ENCODE measurements at regions of chr1 and their contacts with region 1.

Region 1: GRCh38 chr1:214506972-214507482 is 44.4 kb downstream of the PTPN14 start:
- DNase-seq: peak; percentile 97
- H3K4me3 ChIP-seq: peak overlapping the region; percentile 34
- H3K4me3 Mint-ChIP-seq: peak overlapping the region; percentile 65
- H3K27ac Mint-ChIP-seq: peak overlapping the region; percentile 92
- H3K4me1 ChIP-seq: peaks cover 59% of the 10 kb centered on the region
- H3K4me1 Mint-ChIP-seq: peaks cover 47% of the 10 kb centered on the region
- H3K27me3 ChIP-seq: no peaks in the 10 kb centered on the region
- H3K27me3 Mint-ChIP-seq: no peaks in the 10 kb centered on the region
- CTCF ChIP-seq: no peak

Region 2: GRCh38 chr1:214364386-214364785 is 142.6 kb before region 1 on chr1:
- CTCF ChIA-PET with region 1: no interaction called
- POLR2A ChIA-PET with region 1: no interaction called
- intact Hi-C with region 1: loop called (anchors 1 kb)
- DNase-seq: peak in 1 of 2 experiments; percentile 56
- H3K4me3 ChIP-seq: no peak overlapping the region
- H3K4me3 Mint-ChIP-seq: peak overlapping the region; percentile 60
- H3K27ac Mint-ChIP-seq: peak overlapping the region; percentile 90
- H3K4me1 ChIP-seq: peaks cover 53% of the 10 kb centered on the region
- H3K4me1 Mint-ChIP-seq: peaks cover 64% of the 10 kb centered on the region
- H3K27me3 ChIP-seq: no peaks in the 10 kb centered on the region
- H3K27me3 Mint-ChIP-seq: no peaks in the 10 kb centered on the region
- CTCF ChIP-seq: no peak

Region 3: DNA sequence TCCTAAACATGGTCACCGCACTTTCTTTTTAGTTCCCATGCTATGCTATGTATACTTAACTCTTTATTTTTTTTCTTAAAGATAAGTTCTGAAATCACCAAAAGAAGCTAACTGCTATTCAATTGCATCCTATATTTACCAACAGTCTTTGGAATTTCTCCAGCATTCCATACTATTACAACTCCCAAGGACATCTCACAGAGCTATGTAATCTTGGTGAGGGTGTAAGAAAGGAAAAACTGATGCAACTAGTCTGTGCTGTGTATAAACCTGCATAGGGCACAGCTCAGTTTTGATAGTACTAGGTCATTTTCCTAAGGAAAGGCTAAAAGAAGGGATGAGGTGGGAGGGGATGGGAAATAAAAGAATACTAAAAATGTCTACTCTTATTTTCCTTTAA is 33.6 kb before region 1 on chr1:
- CTCF ChIA-PET with region 1: no interaction called
- POLR2A ChIA-PET with region 1: no interaction called
- intact Hi-C with region 1: loop called (anchors 1 kb)
- DNase-seq: peak in 1 of 2 experiments; percentile 40
- H3K4me3 ChIP-seq: no peak overlapping the region
- H3K4me3 Mint-ChIP-seq: peak overlapping the region; percentile 31
- H3K27ac Mint-ChIP-seq: peak overlapping the region; percentile 80
- H3K4me1 ChIP-seq: peaks cover 82% of the 10 kb centered on the region
- H3K4me1 Mint-ChIP-seq: peaks cover 62% of the 10 kb centered on the region
- H3K27me3 ChIP-seq: no peaks in the 10 kb centered on the region
- H3K27me3 Mint-ChIP-seq: no peaks in the 10 kb centered on the region
- CTCF ChIP-seq: no peak

Region 4: GRCh38 chr1:214494706-214495105 is 12.3 kb before region 1 on chr1:
- CTCF ChIA-PET with region 1: no interaction called
- POLR2A ChIA-PET with region 1: no interaction called
- intact Hi-C with region 1: no loop called
- DNase-seq: no peak
- H3K4me3 ChIP-seq: no peak overlapping the region
- H3K4me3 Mint-ChIP-seq: no peak overlapping the region
- H3K27ac Mint-ChIP-seq: peak overlapping the region; percentile 1
- H3K4me1 ChIP-seq: peaks cover 55% of the 10 kb centered on the region
- H3K4me1 Mint-ChIP-seq: peaks cover 58% of the 10 kb centered on the region
- H3K27me3 ChIP-seq: no peaks in the 10 kb centered on the region
- H3K27me3 Mint-ChIP-seq: no peaks in the 10 kb centered on the region
- CTCF ChIP-seq: no peak

Region 5: GRCh38 chr1:214566158-214567104 is 59.4 kb after region 1 on chr1:
- CTCF ChIA-PET with region 1: no interaction called
- POLR2A ChIA-PET with region 1: no interaction called
- intact Hi-C with region 1: no loop called
- DNase-seq: no peak
- H3K4me3 ChIP-seq: no peak overlapping the region
- H3K4me3 Mint-ChIP-seq: no peak overlapping the region
- H3K27ac Mint-ChIP-seq: no peak overlapping the region
- H3K4me1 ChIP-seq: no peaks in the 10 kb centered on the region
- H3K4me1 Mint-ChIP-seq: peaks cover 5% of the 10 kb centered on the region
- H3K27me3 ChIP-seq: no peaks in the 10 kb centered on the region
- H3K27me3 Mint-ChIP-seq: no peaks in the 10 kb centered on the region
- CTCF ChIP-seq: no peak

Region 6: DNA sequence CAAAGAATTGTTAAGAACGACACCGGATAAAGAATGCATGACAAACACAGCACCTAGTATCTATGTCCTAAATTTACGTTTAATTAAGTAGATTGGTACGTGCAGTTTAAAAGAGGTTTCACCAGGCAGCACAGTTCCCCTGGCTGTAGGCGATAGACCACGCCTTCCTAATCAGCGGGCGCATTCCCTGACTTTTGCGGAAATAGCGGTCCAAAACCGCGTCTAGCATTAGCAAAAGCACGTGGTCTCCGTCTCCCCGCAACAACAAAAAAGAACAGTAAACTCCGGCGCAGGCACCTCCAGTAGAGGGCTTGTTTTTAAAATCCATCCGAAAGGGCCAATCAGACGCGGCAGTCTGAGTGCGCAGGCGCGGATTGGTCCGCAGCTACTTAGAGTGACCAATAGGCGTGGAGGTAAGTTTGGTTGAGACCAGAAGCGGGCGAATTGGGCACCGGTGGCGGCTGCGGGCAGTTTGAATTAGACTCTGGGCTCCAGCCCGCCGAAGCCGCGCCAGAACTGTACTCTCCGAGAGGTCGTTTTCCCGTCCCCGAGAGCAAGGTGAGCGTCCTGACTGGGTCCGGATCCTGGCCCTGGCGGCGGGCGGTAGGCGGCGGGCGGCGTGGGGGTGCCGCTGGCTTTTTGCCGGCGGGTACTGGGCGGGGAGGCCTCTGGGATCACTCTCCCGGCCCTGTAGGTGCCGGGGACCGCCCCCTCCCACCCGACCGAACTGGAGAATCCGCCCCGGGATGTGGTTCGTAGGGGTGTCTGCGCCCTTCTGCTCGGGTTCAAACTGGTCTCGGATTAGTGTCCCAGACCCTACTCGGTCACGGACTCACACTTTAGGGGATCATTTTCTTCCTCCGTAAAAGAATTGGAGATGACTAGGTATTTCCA is 96.0 kb after region 1 on chr1 and contains the start of gene CENPF:
- CTCF ChIA-PET with region 1: no interaction called
- POLR2A ChIA-PET with region 1: no interaction called
- intact Hi-C with region 1: loop called (anchors 5 kb)
- DNase-seq: peak; percentile 96 to 98
- H3K4me3 ChIP-seq: peak within 1 kb of the TSS; percentile 78
- H3K4me3 Mint-ChIP-seq: peak within 1 kb of the TSS; percentile 97
- H3K27ac Mint-ChIP-seq: peak within 1 kb of the TSS; percentile 98
- H3K4me1 ChIP-seq: peaks cover 14% of the 10 kb centered on the region; the same call in 1 of the 2 replicates
- H3K4me1 Mint-ChIP-seq: peaks cover 19% of the 10 kb centered on the region
- H3K27me3 ChIP-seq: no peaks in the 10 kb centered on the region
- H3K27me3 Mint-ChIP-seq: no peaks in the 10 kb centered on the region
- CTCF ChIP-seq: peak in 1 of 2 experiments; percentile 10
- total RNA-seq, gene CENPF: 130 and 145 TPM in 2 replicates

Measured in Caco-2 (cell line).